ENCODE measurements at regions of chr10 and their contacts with region 1.

Region 1: DNA sequence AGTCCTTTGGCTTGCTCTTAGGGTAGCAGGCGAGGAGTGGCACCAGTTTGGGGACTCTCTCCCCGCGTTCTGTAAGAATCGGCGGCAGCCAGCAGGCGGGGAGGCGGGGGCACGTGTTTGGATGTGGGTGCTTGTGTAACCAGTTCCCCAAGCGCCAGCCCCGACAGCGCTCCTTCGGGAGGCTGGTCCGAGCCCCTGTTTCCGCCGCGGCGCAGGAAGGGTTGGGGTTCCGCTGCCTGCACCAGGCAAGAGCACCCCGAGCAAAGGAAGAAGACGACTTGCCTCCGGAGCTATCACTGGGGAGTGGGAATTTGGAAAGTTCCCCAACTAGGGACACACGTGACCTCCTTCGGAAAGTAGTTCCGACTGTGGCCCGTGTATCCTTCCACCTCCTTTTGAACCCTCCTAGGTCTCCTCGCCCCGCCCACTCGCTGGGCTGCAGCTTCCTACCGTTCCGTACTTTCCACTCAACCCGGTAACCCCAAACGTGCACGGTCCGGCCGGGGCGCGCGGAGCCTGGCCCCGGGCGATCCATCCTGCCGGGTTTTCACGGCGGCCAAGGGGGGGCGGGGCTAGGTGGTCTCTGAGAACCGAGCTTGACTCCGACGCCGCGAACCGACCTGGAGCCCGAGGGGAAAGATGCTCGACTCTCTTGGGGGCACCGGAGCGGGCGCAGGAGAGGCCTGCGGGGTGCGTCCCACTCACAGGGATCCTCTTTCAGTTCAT is 1.2 kb downstream of the KLLN start:
- DNase-seq: peak; percentile 82 to 97 (median 92)
- ATAC-seq: peak; percentile 60 to 70
- H3K4me3 Mint-ChIP-seq: peak overlapping the region; percentile 93 to 100 (median 98)
- H3K27ac Mint-ChIP-seq: peak overlapping the region; percentile 94 to 99 (median 98)
- H3K4me1 Mint-ChIP-seq: peaks cover 28 to 55% (median 36%) of the 10 kb centered on the region in 4 donors
- H3K27me3 Mint-ChIP-seq: peaks cover 0 to 3% (median 0%) of the 10 kb centered on the region in 5 donors

Region 2: DNA sequence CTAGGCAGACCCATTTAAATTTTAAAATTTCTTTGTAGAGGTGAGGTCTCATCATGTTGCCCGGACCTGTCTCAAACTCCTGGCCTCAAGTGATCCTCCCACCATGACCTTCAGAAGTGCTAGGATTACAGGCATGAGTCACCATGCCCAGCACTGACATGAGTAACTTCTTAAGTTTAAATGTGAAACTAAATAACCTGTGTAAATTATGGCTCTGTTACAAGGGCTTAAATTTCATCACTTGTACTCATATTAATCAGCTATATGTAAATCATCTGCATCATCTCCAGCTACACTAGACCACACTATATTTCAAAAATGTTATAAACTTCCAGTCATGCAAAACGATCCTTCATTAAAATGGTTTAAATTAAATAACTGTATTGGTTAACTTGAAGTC is 100.2 kb before region 1 on chr10:
- POLR2A ChIA-PET with region 1: no interaction called
- DNase-seq: no peak
- ATAC-seq: no peak
- H3K4me3 Mint-ChIP-seq: no peak overlapping the region
- H3K27ac Mint-ChIP-seq: peak overlapping the region in 3 of 10 donors; percentile 11 to 49 (median 21)
- H3K4me1 Mint-ChIP-seq: peaks cover 2 to 8% (median 4%) of the 10 kb centered on the region in 4 donors
- H3K27me3 Mint-ChIP-seq: no peaks in the 10 kb centered on the region

Region 3: DNA sequence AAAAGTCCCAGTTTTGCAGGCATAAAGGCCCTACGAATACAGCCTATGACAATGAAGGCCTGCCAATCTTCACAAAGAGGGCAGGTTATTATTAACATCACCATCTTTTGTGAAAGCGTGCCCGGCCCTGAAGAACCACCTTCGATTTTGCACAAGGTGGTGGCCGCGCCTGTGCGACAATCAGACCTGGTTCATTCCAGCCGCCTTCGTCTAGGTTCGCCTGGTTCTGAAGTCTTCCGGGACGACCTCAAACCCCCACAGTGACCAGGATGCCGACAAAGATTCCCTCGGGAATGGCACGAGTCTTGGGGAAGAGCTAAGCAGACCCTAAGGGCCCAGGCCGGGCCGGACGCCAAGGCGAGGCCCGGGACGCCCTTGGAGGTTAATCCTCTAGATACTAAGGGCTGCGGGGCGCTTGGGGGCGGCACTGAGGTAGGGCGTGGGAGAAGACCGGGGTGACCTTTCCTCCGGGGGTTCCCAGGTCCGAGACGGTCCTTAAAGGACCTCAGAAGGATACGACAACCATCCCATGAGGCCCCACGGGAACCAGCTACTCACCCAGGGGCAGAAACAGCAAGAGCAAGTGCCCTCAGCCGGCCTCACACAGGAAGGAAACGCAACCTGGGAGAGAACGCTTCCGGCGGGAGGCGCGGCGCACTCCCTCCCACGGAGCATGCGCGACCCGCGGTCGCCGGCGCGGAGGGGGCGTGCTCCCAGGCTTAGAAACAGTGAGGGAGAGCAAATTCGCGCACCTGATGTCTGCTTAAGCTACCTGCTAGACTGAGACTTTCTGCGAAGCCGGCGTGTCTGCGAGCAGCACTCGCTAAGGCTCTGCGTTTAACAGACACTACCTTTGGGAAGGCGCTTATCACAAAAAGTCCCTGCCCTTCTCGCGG is 44.3 kb before region 1 on chr10 and contains the start of gene ATAD1:
- POLR2A ChIA-PET with region 1: interaction called, 87 read pairs
- DNase-seq: peak; percentile 82 to 93 (median 88)
- ATAC-seq: peak; percentile 85 to 86
- H3K4me3 Mint-ChIP-seq: peak within 1 kb of the TSS; percentile 87 to 99 (median 96)
- H3K27ac Mint-ChIP-seq: peak within 1 kb of the TSS; percentile 96 to 99 (median 98)
- H3K4me1 Mint-ChIP-seq: peaks cover 16 to 40% (median 33%) of the 10 kb centered on the region in 4 donors
- H3K27me3 Mint-ChIP-seq: no peaks in the 10 kb centered on the region
- polyA plus RNA-seq, gene ATAD1: 32.4 to 39.0 (median 35.9) TPM

Region 4: DNA sequence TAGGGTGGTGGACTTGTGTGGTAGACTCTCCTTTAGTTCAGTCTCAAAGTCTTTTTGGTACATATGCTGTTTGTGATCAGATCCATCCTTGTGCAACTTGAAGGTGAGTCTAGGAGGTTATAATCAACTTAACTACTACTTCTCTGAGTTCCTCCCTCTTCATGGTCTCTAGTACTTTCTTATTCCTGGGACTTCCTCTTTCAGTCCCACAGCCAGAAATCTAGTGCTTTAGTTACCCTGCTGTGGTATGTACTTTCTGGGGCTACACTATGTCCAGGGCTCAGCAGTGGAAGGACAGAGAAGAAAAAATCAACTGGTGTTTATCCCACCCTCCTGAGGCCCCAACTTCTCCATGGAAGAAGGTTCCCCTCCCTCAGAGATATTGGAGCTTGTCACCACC is 24.7 kb before region 1 on chr10:
- POLR2A ChIA-PET with region 1: no interaction called
- DNase-seq: no peak
- ATAC-seq: no peak
- H3K4me3 Mint-ChIP-seq: no peak overlapping the region
- H3K27ac Mint-ChIP-seq: no peak overlapping the region
- H3K4me1 Mint-ChIP-seq: peaks cover 0 to 5% (median 0%) of the 10 kb centered on the region in 4 donors
- H3K27me3 Mint-ChIP-seq: no peaks in the 10 kb centered on the region

Region 5: DNA sequence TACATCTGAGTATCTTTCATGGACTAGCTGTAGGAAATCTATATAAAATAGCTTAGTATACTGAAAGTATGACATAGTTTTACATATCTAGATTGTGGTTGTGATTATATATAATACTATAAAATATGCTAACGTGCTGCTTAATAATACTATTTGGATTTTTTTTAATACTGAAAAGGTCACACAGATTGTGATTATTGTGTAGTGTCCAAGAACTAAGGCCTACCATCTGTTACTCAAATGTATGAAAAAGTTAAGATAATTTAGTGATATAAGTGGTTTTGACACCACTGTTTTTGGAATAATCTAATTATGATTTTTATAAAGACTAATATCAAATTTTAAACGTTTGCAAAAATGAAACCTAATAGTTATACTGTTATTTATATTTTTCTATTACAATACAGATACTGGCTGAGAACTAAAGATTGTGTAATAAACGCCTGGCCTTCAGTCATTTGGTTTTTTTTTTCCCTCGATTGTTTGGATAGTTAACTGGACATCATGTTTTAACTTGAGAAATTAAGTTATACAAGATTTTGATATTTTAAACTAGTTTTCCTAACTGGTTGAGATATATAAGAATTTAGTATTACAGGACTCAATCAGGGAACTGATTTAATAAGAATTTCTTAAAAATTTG is 13.9 kb after region 1 on chr10:
- POLR2A ChIA-PET with region 1: interaction called, 40 read pairs
- DNase-seq: no peak
- ATAC-seq: no peak
- H3K4me3 Mint-ChIP-seq: peak overlapping the region in 1 of 10 donors; percentile 43
- H3K27ac Mint-ChIP-seq: peak overlapping the region in 1 of 10 donors; percentile 31
- H3K4me1 Mint-ChIP-seq: peaks cover 16 to 89% (median 55%) of the 10 kb centered on the region in 4 donors
- H3K27me3 Mint-ChIP-seq: no peaks in the 10 kb centered on the region

Region 6: GRCh38 chr10:88091490-88092105 is 229.5 kb after region 1 on chr10:
- POLR2A ChIA-PET with region 1: interaction called, 29 read pairs
- DNase-seq: peak; percentile 27 to 84 (median 70)
- ATAC-seq: peak; percentile 96 to 99
- H3K4me3 Mint-ChIP-seq: peak overlapping the region in 9 of 10 donors; percentile 12 to 75 (median 57)
- H3K27ac Mint-ChIP-seq: peak overlapping the region; percentile 32 to 95 (median 88)
- H3K4me1 Mint-ChIP-seq: peaks cover 35 to 50% (median 47%) of the 10 kb centered on the region in 4 donors
- H3K27me3 Mint-ChIP-seq: no peaks in the 10 kb centered on the region

Region 7: DNA sequence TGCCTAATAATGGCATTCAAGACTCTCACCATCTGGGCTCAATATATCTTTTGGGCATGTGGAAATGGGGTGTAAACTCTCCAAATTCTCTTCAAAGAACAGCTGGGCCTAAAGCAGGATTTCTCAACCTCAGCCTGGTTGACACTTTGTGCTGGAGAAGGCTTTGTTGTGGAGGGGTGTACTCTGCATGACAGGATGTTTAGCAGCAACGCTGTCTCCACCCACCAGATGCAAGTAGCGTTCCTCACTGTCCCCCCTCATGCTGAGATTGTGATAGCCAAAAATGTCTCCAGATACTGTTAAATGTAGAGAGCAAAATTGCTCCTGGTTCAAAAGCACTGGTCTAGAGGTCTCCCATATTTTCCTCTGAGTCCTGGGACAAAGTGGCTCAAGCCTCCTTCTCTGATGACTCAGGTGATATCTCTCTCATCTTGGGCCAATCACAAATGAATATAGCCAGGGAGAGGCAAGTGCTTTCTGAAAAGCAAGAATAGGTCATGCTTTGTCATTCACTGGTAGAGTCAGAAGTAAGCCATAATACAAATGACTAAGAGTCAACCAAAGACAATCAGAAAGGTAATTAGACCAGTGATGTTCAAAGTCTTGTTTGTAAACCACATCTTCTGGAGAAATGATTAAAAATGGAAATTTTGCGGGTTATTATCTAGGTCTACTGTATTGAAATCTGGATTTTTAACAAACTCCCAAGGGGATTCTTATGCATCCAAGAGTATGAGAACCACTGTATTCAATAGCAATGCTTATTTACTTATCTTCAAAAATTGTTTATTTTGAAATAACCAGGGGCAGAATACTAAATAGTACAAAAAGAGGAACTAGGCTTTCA is 332.1 kb after region 1 on chr10:
- POLR2A ChIA-PET with region 1: interaction called, 15 read pairs
- DNase-seq: peak; percentile 9 to 82 (median 66)
- ATAC-seq: peak; percentile 99 to 100
- H3K4me3 Mint-ChIP-seq: peak overlapping the region; percentile 25 to 76 (median 62)
- H3K27ac Mint-ChIP-seq: peak overlapping the region; percentile 23 to 92 (median 90)
- H3K4me1 Mint-ChIP-seq: peaks cover 24 to 54% (median 52%) of the 10 kb centered on the region in 4 donors
- H3K27me3 Mint-ChIP-seq: no peaks in the 10 kb centered on the region

Region 8: DNA sequence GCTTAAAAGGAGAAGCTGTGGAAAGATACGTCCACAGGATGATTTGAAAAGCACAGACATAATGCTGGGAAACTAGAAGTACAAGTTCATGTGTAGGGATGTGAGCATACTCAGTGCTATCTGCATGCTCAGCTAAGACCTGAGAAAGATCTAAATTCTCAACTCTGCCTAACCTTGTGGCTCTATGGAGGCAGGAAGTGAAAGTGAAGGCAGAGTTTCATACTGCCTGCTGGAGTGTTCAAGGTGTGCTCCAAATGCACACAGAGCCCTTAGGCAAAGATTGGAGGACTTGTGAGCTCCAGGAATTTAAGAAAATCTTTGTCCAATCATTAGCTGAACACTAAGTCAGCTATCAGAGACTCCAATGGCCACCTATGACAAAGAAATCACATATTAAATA is 530.1 kb after region 1 on chr10:
- POLR2A ChIA-PET with region 1: interaction called, 163 read pairs
- DNase-seq: peak in 3 of 10 donors; percentile 23 to 57 (median 32)
- ATAC-seq: peak; percentile 78 to 85
- H3K4me3 Mint-ChIP-seq: peak overlapping the region; percentile 8 to 71 (median 46)
- H3K27ac Mint-ChIP-seq: peak overlapping the region in 9 of 10 donors; percentile 66 to 95 (median 88)
- H3K4me1 Mint-ChIP-seq: peaks cover 11 to 19% (median 16%) of the 10 kb centered on the region in 4 donors
- H3K27me3 Mint-ChIP-seq: no peaks in the 10 kb centered on the region